ENCODE measurements at regions of chr2 and their contacts with region 1.

Region 1: GRCh38 chr2:168920504-168921157 is 19.5 kb downstream of the G6PC2 start:
- DNase-seq: no peak
- ATAC-seq: peak; percentile 63
- H3K4me3 ChIP-seq: no peak overlapping the region
- H3K27ac ChIP-seq: no peak overlapping the region
- H3K4me1 ChIP-seq: no peaks in the 10 kb centered on the region
- H3K27me3 ChIP-seq: peaks cover 0 to under 1% of the 10 kb centered on the region in 2 experiments; a peak in 2 of 4 replicates
- CTCF ChIP-seq: peak; percentile 35 to 61 (median 56); a peak in 5 of 6 replicates
- EP300 ChIP-seq: no peak
- POLR2A ChIP-seq: no peak
- RAD21 ChIP-seq: peak; percentile 74

Region 2: GRCh38 chr2:168136392-168136977 is 784.1 kb before region 1 on chr2:
- CTCF ChIA-PET with region 1: no interaction called
- POLR2A ChIA-PET with region 1: no interaction called
- RAD21 ChIA-PET with region 1: no interaction called
- SMC1A ChIA-PET with region 1: no interaction called
- in situ Hi-C with region 1: loop called (anchors 5 kb)
- intact Hi-C with region 1: loop called (anchors 1 kb)
- DNase-seq: no peak
- ATAC-seq: peak; percentile 58; the same call in 2 of the 3 replicates
- H3K4me3 ChIP-seq: no peak overlapping the region
- H3K27ac ChIP-seq: no peak overlapping the region
- H3K4me1 ChIP-seq: no peaks in the 10 kb centered on the region
- H3K27me3 ChIP-seq: 0 out of 4 replicates have a peak, but pooled peaks cover 0 to 7% of the 10 kb centered on the region in 2 experiments
- CTCF ChIP-seq: peak; percentile 36 to 45 (median 40); a peak in 5 of 6 replicates
- EP300 ChIP-seq: no peak
- POLR2A ChIP-seq: no peak
- RAD21 ChIP-seq: peak; percentile 43

Region 3: GRCh38 chr2:168705534-168706470 is 214.8 kb before region 1 on chr2:
- CTCF ChIA-PET with region 1: interaction called, 4 read pairs
- POLR2A ChIA-PET with region 1: no interaction called
- RAD21 ChIA-PET with region 1: no interaction called
- SMC1A ChIA-PET with region 1: no interaction called
- in situ Hi-C with region 1: no loop called
- intact Hi-C with region 1: loop called (anchors 1 kb)
- DNase-seq: no peak
- ATAC-seq: peak; percentile 65
- H3K4me3 ChIP-seq: no peak overlapping the region
- H3K27ac ChIP-seq: no peak overlapping the region
- H3K4me1 ChIP-seq: peaks cover 3% of the 10 kb centered on the region
- H3K27me3 ChIP-seq: no peaks in the 10 kb centered on the region
- CTCF ChIP-seq: peak; percentile 30 to 45 (median 35); a peak in 4 of 6 replicates
- EP300 ChIP-seq: no peak
- POLR2A ChIP-seq: no peak
- RAD21 ChIP-seq: peak; percentile 61

Region 4: DNA sequence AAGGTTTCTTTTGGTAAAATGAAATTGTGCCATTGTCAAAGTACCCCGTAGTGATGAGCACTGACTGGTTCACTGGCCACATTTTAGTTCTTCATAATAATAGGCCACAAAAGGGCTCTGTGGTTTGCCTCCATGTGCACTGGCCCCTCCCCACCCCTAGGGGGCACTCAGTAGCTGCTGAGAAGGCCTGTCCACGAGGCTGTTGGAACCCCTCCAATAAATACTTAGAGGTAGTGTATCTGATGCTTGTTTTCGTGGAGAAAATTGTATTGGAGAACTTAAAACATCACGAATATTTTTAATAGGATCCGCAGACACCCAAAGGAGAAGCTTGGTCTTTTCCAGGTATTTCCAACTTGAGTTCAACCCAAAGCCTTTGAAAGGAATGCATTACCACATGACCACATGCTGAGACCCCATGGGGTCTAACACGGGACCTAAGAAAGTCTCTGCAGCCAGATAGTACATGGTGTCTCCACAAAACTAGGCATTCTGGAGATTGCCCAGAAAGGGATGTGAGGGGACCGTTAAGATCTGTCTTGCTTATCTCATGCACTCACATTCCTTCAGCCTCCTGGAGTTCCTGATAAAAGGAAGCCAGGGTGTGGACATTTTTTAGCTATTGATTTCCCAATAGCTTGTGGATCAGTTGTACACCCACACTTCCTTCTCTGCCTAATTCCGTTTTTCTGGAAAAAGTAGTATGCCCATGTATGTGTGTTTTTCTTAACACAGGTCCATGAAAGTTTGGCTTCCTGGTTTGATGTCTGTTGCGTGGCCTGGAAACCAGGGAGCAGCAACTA is 146.7 kb before region 1 on chr2:
- CTCF ChIA-PET with region 1: interaction called, 12 read pairs
- POLR2A ChIA-PET with region 1: no interaction called
- RAD21 ChIA-PET with region 1: interaction called, 3 read pairs
- SMC1A ChIA-PET with region 1: interaction called, 7 read pairs
- in situ Hi-C with region 1: loop called (anchors 5 kb)
- intact Hi-C with region 1: loop called (anchors 1 kb)
- DNase-seq: no peak
- ATAC-seq: peak; percentile 92
- H3K4me3 ChIP-seq: no peak overlapping the region
- H3K27ac ChIP-seq: no peak overlapping the region
- H3K4me1 ChIP-seq: no peaks in the 10 kb centered on the region
- H3K27me3 ChIP-seq: no peaks in the 10 kb centered on the region
- CTCF ChIP-seq: peak; percentile 57 to 77 (median 66)
- EP300 ChIP-seq: no peak
- POLR2A ChIP-seq: no peak
- RAD21 ChIP-seq: peak; percentile 63

Region 5: GRCh38 chr2:168956392-168956791 is 35.8 kb after region 1 on chr2:
- CTCF ChIA-PET with region 1: no interaction called
- POLR2A ChIA-PET with region 1: no interaction called
- RAD21 ChIA-PET with region 1: no interaction called
- SMC1A ChIA-PET with region 1: no interaction called
- in situ Hi-C with region 1: no loop called
- intact Hi-C with region 1: no loop called
- DNase-seq: no peak
- ATAC-seq: no peak
- H3K4me3 ChIP-seq: no peak overlapping the region
- H3K27ac ChIP-seq: no peak overlapping the region
- H3K4me1 ChIP-seq: no peaks in the 10 kb centered on the region
- H3K27me3 ChIP-seq: peaks cover 0 to 2% of the 10 kb centered on the region in 2 experiments; a peak in 1 of 4 replicates
- CTCF ChIP-seq: no peak
- EP300 ChIP-seq: no peak
- POLR2A ChIP-seq: no peak
- RAD21 ChIP-seq: no peak